Cardiac septum (tissue), 1 donor: ENCODE measurements at regions of chr5 and their contacts with region 1.

Region 1: DNA sequence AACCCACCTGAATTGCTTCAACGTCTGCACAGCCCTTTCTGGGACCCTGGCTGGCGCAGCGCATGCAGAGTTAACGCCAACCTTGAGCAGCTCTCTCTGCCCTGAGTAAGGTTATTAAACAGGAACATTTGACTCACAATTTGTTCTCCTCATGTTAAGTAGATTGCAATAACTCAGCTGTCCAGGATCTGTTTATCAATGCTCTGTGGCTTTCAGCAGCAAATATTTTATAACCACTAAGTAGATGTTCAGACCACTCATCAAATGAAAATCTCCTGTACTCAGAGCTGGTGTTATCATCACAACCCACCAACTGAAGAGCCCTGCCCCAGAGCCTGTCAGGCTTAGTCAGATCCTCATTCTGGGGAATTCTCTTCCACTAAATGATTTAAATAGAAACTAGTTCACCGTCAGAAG is 403.0 kb downstream of the ZNF608 start:
- DNase-seq: no peak

Region 2: DNA sequence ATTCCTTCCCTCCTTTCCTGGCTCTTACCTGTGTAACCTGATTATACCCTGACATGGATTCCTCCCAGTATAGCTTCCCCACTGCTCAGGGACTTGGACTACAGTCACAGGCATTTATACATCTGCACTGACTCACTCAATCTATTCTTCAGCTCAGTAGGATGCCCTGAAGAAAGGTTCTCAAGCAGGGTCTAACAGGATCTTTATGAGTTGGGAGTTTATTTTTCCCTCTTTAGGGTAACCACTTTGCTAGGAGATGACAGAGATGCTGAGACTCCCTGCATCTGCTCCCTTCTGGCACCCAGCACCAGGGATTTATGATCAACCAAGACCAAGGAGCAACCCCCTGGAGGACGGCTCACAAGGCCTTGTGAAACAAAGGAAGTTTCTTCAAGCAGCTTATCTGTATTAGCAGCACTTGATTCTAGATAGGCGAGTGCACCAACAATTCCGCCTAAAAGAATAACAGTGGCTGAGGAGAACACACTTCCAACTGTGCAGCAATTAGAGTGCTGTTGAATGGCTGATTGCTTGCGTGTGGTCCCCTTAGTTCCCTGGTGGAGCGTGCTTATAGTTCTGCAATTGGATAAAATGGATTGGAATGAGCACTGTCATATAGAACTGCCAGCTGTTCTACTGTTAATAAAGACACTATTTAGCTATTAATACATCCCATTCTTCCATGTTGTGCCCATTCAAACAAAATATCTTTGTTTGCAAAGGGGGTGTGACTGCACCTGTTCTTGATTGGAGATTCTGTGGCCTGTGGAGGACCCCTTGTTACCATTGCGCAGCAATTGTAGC is 79.6 kb before region 1 on chr5:
- intact Hi-C with region 1: no loop called
- DNase-seq: no peak

Region 3: DNA sequence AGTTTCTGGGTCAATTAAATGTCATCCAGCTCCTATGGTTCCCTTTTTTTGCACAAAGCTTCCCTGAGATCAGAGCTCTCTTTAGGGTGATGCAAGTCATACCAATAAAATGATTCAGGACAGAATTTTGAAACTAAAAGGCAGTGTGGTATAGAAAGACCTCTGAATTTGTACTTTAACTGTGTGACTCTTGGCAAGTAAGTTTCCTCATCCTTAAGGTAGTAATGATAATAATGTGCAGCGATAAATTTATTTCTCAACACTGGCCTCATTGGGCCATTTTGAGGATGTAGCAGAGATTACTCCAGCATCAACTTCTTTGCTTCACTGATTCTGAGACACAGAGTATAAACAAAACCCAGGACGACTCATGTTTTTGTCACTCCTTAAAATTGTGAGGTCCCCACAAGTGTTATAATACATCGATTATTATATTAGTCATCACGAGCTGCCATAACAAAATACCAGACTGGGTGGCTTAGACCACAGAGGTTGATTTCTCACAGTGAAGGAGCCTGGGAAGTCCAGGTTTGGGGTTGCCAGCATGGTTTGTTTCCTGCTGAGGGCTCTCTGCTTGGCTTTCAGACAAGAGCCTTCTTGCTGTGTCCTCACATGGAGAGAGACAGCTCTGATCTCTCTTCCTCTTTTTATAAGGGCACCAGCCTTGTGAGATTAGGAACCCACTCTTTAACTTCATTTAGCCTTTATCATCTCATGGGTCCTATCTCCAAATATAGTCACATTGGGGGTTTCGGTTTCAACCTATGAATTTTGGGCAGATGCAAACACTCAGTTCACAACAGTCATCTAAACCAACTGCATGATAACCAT is 110.0 kb after region 1 on chr5:
- intact Hi-C with region 1: no loop called
- DNase-seq: no peak

Region 4: DNA sequence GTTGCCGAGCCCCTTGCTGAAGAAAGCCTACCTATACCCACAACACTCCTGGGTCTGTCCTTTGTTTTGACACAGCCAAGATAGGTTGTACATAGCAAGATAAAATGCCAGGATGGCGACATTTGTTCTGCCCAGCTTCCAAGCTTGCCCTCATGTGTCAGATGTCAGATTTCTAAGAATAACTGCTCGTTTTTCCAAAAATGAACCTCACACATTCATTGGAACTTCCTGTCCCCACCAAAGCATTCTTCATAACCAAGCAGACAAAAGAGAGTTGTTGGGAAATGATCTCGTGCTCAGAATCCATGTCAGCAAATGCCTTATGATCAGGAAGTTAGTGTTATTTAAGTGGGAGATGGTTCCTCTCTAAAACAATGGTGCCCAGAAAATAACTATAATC is 192.9 kb after region 1 on chr5:
- intact Hi-C with region 1: loop called (anchors 5 kb)
- DNase-seq: no peak

Region 5: DNA sequence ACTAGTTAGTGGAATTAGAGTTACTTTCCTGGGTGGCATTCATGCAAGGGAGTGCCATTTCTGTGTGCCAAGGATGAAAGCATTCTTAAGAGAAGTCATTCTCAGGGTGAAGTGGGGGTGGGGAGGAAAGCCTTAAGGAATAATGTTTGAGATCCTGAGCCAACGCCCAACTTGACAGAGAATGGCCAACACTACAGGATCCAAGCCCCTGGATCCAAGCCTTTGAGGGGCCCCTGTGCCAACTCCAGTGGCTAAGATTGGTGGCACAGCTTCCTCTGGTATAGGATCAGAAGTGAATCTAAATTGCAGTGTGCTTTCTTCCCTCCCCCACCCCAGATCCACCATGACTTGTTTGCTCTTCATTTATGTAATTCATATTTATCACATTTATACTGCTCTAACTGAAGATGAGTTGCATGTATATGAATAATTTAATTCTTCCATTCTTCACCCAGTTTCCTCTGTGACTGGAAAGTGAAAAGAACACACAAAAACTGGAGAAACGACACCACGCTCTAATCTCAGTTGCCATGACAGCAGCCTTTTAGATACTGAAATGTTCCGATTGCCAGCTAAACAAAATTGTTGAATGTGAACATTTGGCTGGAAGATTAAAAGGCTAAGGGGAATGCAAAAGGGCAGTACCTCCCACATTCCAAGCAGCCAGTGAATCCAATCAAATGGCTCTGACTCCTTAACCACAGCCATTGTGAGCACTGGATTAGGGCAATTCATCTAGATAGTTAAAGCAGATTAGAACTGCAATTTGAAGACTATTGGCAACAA is 398.4 kb after region 1 on chr5:
- intact Hi-C with region 1: loop called (anchors 5 kb)
- DNase-seq: no peak